Activated T-helper 2 cell treated with anti-CD3 and anti-CD28 coated beads, Interferon-gamma antibody, Interleukin-2, Interleukin-4, amounts not matched to agents 10 μg/mL and 5 μg/mL and 100 μg/mL, durations not matched to agents 14 hours and 24 hours and 36 hours (primary cell): ENCODE measurements at regions of chr10 and their contacts with region 1.

Region 1: DNA sequence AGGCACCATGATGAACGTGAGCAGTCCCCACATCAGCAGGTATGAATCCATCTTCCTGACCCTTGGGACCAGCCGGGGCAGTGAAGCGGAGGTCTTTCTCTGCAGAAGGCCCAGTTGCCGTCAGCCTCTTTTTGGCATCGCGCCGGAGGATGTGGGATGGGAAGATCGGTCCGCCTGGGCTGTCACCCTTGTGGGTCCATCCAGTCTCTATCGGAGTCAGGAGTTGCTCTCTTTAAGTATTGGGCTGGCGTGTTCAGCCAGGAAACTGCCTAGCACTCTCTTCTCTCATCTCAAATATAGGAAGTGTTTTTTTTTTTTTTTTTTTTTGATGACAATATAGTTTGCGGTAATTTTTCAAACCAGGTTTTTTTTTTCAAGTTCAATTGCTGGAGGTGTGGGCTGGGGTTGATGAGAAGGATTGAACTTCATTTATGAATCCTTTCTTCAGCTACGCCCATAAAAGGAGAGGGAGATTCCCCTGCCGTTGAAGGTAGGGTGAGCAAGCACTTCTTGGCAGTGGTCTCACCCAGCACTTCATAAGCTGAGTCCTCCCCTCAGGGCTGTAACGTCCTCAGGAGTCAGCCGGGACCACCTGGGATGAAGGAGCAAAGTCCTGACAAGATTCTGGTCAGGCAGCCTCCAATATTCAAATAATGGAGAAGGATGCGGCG is at the start of gene IL2RA:
- DNase-seq: peak; percentile 61
- H3K4me3 Mint-ChIP-seq: peak within 1 kb of the TSS; percentile 97
- H3K27ac Mint-ChIP-seq: peak within 1 kb of the TSS; percentile 97
- H3K4me1 Mint-ChIP-seq: peaks cover 58% of the 10 kb centered on the region
- H3K27me3 Mint-ChIP-seq: no peaks in the 10 kb centered on the region
- total RNA-seq, gene IL2RA: 1,777 and 1,808 TPM in 2 replicates

Region 2: DNA sequence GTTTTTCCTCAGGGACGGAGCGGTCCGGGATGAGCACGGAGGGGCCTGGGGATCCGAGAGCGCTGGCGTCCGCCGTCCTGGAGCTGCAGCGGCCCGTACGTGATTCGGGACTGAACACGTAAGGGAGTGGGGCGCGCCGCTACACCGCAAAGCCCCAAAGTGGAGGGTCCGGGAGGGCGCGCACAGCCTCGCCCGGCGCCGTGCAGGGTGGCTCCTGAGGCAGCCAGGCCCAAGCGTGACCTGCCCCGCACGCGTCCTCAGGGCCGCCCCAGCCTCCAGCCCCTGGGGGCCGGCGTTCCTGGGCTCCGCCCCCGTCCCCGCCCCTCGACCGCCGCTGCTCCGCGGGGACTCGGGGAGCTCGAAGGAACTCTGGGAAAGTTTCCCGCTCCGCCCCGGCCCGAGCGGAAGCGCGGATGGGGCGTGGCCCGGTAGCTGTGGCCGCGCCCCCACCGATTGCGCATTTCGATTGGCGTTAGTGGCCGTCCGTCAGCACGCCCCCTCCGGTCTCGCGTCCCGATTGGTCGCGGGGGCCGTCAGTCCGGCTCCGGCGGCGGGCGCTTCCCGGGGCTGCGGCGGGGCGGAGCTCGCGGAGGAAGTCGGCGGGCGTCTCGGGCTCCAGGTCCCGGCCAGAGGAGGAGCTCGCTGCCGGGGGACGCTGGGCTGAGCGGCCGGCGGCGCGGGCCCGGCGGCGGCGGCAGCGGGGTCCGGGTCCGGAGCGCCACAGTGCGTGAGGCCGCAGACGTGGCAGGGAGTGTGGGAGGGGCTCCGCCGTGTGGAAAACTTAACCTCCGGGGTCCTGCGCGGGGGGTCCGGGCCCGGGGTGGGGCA is 172.4 kb before region 1 on chr10 and contains the starts of genes ANKRD16 and FBH1:
- intact Hi-C with region 1: no loop called
- DNase-seq: peak; percentile 98
- H3K4me3 Mint-ChIP-seq: peak within 1 kb of the TSS; percentile 94
- H3K27ac Mint-ChIP-seq: peak within 1 kb of the TSS; percentile 79
- H3K4me1 Mint-ChIP-seq: peaks cover 41% of the 10 kb centered on the region
- H3K27me3 Mint-ChIP-seq: no peaks in the 10 kb centered on the region
- total RNA-seq, gene ANKRD16: 10.4 and 11.6 TPM in 2 replicates
- total RNA-seq, gene FBH1: 57.2 and 58.0 TPM in 2 replicates

Region 3: GRCh38 chr10:6045314-6045848 is 16.9 kb before region 1 on chr10:
- intact Hi-C with region 1: loop called (anchors 1 kb)
- DNase-seq: peak; percentile 54
- H3K4me3 Mint-ChIP-seq: peak overlapping the region; percentile 69
- H3K27ac Mint-ChIP-seq: peak overlapping the region; percentile 94
- H3K4me1 Mint-ChIP-seq: peaks cover 81% of the 10 kb centered on the region
- H3K27me3 Mint-ChIP-seq: no peaks in the 10 kb centered on the region

Region 4: DNA sequence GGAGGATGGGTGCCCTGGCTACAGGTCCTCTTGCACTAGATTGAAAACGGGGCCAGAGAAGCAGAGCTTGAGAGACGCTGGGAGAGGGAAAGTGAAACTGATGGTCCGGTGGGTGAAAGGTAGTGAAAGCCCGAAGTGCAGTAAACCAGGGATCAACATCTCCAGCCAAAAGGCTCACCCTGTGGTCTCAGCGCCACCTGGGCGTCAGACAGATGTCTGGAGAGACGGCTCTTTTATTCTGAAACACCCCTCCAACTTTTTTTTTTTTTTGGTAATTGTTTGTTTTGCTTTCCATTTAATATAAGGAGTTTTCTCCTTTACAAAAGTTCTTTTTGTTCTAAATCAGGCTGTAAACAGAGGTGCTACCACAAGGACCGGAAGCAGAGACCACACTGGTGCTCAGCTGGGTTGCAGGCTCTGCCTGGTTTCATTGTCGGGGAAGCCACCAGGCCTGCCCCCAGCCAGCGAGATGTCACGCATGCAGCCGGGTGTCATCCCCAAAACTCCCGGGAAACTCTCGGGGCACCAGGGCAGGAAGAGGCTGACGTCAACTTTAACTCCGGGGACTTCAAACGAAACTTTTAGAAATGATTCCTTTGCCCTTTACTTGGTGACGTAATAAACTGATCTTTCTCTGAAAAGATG is 11.3 kb before region 1 on chr10:
- intact Hi-C with region 1: loop called (anchors 1 kb)
- DNase-seq: peak; percentile 90
- H3K4me3 Mint-ChIP-seq: peak overlapping the region; percentile 85
- H3K27ac Mint-ChIP-seq: peak overlapping the region; percentile 91
- H3K4me1 Mint-ChIP-seq: peaks cover 83% of the 10 kb centered on the region
- H3K27me3 Mint-ChIP-seq: no peaks in the 10 kb centered on the region

Region 5: GRCh38 chr10:6083523-6084475 is 21.6 kb after region 1 on chr10:
- intact Hi-C with region 1: loop called (anchors 1 kb)
- DNase-seq: peak; percentile 67
- H3K4me3 Mint-ChIP-seq: peak overlapping the region; percentile 82
- H3K27ac Mint-ChIP-seq: peak overlapping the region; percentile 92
- H3K4me1 Mint-ChIP-seq: peaks cover 73% of the 10 kb centered on the region
- H3K27me3 Mint-ChIP-seq: no peaks in the 10 kb centered on the region

Region 6: DNA sequence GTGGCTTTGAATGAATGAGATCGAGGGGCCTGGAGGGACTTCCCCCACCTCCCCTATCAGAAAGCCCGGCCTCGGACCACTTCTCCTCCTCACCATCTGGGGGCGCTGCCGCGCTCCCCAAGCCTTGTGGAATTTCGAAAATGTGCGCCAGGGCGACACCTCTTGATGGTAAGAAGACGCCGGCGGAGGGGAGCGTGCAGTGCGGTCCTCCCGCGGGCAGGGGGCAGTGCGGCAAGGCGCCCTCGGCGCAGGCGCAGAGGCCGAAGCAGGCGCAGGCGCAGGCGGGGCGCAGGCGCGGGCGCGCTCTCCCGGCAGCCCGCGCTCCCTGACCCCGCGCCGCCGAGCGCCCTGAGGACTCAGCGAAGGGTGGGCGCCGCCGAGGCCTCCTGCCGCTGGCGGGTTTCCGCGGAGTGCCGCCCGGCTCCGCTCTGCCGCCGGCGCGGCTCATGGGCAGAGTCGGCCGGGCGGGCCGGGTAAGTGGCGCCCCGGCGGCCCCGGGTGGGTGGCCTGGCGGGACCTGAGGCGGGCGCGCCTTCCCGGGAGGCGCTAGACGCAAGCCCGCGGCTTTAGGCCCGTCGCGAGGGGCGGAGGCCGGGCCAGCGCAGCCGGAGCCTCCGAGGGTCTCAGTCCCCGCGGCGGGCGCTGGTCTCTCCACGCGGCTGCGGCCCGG is 26.6 kb after region 1 on chr10 and contains the start of gene RBM17:
- intact Hi-C with region 1: loop called (anchors 1 kb)
- DNase-seq: peak; percentile 98
- H3K4me3 Mint-ChIP-seq: peak within 1 kb of the TSS; percentile 98
- H3K27ac Mint-ChIP-seq: peak within 1 kb of the TSS; percentile 80
- H3K4me1 Mint-ChIP-seq: peaks cover 63% of the 10 kb centered on the region
- H3K27me3 Mint-ChIP-seq: no peaks in the 10 kb centered on the region
- total RNA-seq, gene RBM17: 257 and 266 TPM in 2 replicates

Region 7: DNA sequence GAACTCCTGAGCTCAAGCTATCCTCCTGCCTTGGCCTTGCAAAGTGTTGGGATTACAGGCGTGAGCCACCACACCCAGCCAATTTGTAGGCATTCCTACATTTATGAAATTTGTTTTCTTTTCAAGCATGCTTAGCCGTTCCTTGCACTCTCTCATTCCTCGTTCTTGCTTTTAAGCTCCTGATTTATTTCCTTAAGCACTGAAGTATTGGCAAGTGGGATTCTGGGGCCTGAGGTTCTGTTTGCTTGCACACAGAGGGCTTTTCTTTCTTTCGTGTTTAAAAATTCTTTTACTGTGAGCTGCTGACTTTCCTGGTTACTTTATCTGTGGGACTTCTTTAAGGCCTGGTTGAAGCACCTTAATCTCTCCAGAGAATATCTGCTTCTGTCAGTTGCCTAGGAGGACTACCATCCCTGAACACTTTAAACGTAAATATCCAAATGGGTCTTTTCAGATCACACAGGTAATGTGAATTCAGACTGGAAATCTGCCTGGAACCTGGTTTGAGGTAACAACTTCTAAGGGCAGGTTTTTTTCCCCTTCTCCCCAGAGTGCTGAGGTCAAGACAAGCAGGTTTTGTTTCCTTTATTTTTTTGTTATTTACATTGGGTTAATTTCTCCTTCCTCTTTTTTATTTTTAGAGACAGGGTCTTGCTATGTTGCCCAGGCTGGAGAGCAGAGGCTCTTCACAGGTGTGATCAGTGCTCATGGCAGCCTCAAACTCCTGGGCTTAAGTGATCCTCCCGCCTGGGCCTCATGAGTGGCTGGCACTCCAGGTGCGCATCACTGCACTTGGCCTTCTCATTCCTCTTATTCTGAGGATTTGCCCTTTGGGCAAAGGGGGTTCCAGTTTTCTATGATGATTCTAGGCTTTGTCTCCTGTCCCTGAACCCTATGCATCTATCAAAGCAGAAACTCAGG is 243.4 kb after region 1 on chr10:
- intact Hi-C with region 1: no loop called
- DNase-seq: no peak
- H3K4me3 Mint-ChIP-seq: no peak overlapping the region
- H3K27ac Mint-ChIP-seq: no peak overlapping the region
- H3K4me1 Mint-ChIP-seq: peaks cover 11% of the 10 kb centered on the region
- H3K27me3 Mint-ChIP-seq: no peaks in the 10 kb centered on the region